GM18951 (cell line): ENCODE measurements at regions of chr10 and their contacts with region 1.

Region 1: DNA sequence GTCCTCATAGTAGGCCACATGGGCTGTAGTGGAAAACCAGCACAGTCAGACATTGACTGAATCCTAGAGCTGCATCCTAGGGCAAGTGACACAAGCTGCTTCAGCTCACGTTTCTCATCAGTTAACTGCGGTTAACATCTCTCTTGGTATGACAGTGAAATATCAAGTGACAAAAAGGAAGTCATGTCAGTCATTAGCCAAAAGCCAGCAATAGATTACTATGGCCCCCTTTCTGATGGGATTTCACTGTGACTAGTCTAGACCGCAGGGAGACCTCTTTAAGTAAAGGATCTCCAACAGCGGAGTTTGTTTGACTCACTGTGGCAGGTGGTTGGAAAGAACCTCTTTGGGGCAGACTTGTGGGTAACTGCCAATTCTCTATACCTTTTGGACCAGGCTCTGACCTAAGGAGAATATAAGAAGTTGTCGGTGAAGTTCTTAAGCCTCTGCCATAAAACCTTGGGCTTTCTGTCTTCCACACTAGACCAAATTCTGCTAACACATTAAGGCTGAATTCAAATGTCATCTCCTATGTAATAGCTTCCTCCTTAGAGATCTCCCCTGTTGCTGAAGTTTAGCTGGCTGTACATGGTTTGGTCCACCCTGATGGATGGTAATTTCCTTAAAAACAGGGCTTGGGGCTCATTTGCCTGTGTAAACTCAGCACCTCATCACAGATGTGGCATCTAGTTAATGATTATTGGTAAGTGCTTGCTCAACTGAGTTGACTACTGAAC is 115.3 kb downstream of the SGMS1 start:
- POLR2A ChIP-seq: no peak

Region 2: GRCh38 chr10:50421026-50421719 is 87.3 kb before region 1 on chr10:
- in situ Hi-C with region 1: loop called (anchors 10 kb)
- POLR2A ChIP-seq: no peak